BJ (cell line): ENCODE measurements at regions of chr6 and their contacts with region 1.

Region 1: GRCh38 chr6:33705955-33706725 is 5.4 kb downstream of the UQCC2 start:
- DNase-seq: no peak
- H3K4me3 ChIP-seq: no peak overlapping the region
- H3K27me3 ChIP-seq: no peaks in the 10 kb centered on the region
- CTCF ChIP-seq: no peak

Region 2: DNA sequence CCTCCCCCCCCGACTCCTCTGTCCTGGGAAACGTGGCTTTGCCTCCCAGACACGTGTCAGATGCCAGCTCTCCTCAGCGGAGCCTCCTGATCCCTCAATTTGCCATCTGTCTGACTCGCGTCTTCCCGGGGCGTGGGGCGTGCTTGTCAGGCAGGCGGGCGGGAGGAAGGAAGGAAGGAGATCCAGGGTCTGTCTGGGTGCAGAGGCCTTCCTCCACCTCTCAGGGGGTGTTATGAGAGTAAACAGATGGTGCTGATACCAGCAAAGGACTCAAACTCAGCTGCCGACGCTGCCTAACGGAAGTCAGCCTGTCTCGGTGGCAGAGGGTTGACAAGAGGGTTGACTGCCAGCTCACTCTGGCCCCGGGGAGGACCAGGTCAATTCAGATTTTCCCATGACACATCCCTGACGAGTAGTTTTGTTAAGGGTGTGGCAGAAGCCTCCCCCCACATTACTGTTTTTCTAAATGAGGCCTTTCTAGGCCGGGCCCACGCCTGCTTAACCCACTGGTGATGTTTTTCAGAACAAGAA is 11.7 kb before region 1 on chr6:
- CTCF ChIA-PET with region 1: interaction called, 12 read pairs
- POLR2A ChIA-PET with region 1: no interaction called
- DNase-seq: no peak
- H3K4me3 ChIP-seq: no peak overlapping the region
- H3K27me3 ChIP-seq: no peaks in the 10 kb centered on the region
- CTCF ChIP-seq: no peak

Region 3: DNA sequence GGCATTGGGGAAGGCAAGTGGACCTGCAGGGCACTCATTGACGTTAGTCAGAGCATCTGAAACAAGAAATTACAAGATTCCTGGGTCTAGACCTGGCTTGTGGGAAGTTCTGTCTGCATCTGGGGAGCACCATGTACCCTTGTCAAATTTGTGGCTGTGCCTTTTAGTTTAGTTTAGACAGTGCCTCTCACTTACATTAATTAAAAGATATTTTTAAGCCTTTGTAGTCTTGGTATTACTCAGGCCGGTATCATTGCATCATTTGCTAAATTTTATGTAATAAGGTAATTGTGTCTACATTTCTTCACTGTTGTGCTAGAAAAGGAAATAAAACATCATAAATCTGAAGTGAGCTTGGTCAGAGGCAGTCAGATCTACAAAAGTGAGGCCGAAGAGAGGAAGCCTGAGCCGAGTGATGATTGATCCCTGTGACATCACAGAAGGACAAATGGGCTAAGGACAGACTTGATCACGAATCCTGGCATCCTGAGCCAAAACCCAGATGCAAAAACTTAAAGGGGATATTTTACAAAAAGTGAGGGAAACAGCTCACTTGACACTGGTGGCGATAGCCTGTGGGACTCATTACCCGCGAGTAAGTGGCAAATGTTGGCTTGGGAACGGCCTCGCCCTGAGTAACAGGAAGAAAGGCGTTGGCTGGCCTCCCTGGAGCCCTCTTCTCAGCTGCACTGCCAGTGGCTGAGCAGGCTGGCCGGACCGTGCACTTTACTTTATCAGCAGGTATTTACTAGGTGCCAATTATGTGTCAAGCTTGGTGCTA is 1328.5 kb after region 1 on chr6:
- CTCF ChIA-PET with region 1: no interaction called
- POLR2A ChIA-PET with region 1: no interaction called
- DNase-seq: no peak
- H3K4me3 ChIP-seq: no peak overlapping the region
- H3K27me3 ChIP-seq: no peaks in the 10 kb centered on the region
- CTCF ChIP-seq: no peak